Naive thymus-derived CD4-positive, alpha-beta T cell (primary cell): ENCODE measurements at regions of chr13 and their contacts with region 1.

Region 1: GRCh38 chr13:46553886-46554858 is 1.2 kb downstream of the LRCH1 start:
- DNase-seq: peak; percentile 52 to 77 (median 64)
- ATAC-seq: peak; percentile 77
- H3K4me3 ChIP-seq: peak overlapping the region; percentile 90
- H3K4me3 Mint-ChIP-seq: peak overlapping the region; percentile 92 to 99 (median 95)
- H3K27ac ChIP-seq: peak overlapping the region; percentile 82
- H3K27ac Mint-ChIP-seq: peak overlapping the region; percentile 70 to 96 (median 88)
- H3K4me1 ChIP-seq: peaks cover 26 to 29% of the 10 kb centered on the region in 2 donors
- H3K4me1 Mint-ChIP-seq: peaks cover 32 to 61% (median 55%) of the 10 kb centered on the region in 7 donors
- H3K27me3 ChIP-seq: no peaks in the 10 kb centered on the region
- H3K27me3 Mint-ChIP-seq: peaks cover 0 to 5% (median 0%) of the 10 kb centered on the region in 5 donors

Region 2: GRCh38 chr13:44988973-44989817 is 1565.0 kb before region 1 on chr13 and contains the starts of genes GPALPP1 and NUFIP1:
- CTCF ChIA-PET with region 1: no interaction called
- POLR2A ChIA-PET with region 1: no interaction called
- intact Hi-C with region 1: loop called in 1 of 2 experiments (anchors 5 kb)
- DNase-seq: peak; percentile 79 to 94 (median 90)
- ATAC-seq: peak; percentile 98
- H3K4me3 ChIP-seq: peak within 1 kb of the TSS; percentile 94
- H3K4me3 Mint-ChIP-seq: peak within 1 kb of the TSS; percentile 96 to 100 (median 98)
- H3K27ac ChIP-seq: peak within 1 kb of the TSS; percentile 95
- H3K27ac Mint-ChIP-seq: peak within 1 kb of the TSS; percentile 91 to 99 (median 98)
- H3K4me1 ChIP-seq: peaks cover 18 to 27% of the 10 kb centered on the region in 2 donors
- H3K4me1 Mint-ChIP-seq: peaks cover 42 to 81% (median 68%) of the 10 kb centered on the region in 7 donors
- H3K27me3 ChIP-seq: no peaks in the 10 kb centered on the region
- H3K27me3 Mint-ChIP-seq: no peaks in the 10 kb centered on the region
- total RNA-seq, gene GPALPP1: 29.7 to 43.1 (median 33.0) TPM
- total RNA-seq, gene NUFIP1: 3.7 to 6.6 (median 5.4) TPM

Region 3: GRCh38 chr13:46052319-46053161 is 501.6 kb before region 1 on chr13 and contains the start of gene ZC3H13:
- CTCF ChIA-PET with region 1: no interaction called
- POLR2A ChIA-PET with region 1: no interaction called
- intact Hi-C with region 1: loop called (anchors 5 kb)
- DNase-seq: peak; percentile 75 to 95 (median 92)
- ATAC-seq: peak; percentile 100
- H3K4me3 ChIP-seq: peak within 1 kb of the TSS; percentile 89
- H3K4me3 Mint-ChIP-seq: peak within 1 kb of the TSS; percentile 87 to 96 (median 94)
- H3K27ac ChIP-seq: peak within 1 kb of the TSS; percentile 98
- H3K27ac Mint-ChIP-seq: peak within 1 kb of the TSS; percentile 93 to 99 (median 97)
- H3K4me1 ChIP-seq: peaks cover 22 to 26% of the 10 kb centered on the region in 2 donors
- H3K4me1 Mint-ChIP-seq: peaks cover 19 to 63% (median 46%) of the 10 kb centered on the region in 7 donors
- H3K27me3 ChIP-seq: no peaks in the 10 kb centered on the region
- H3K27me3 Mint-ChIP-seq: peaks cover 5 to 32% (median 15%) of the 10 kb centered on the region in 5 donors
- total RNA-seq, gene ZC3H13: 41.1 to 67.0 (median 46.5) TPM

Region 4: DNA sequence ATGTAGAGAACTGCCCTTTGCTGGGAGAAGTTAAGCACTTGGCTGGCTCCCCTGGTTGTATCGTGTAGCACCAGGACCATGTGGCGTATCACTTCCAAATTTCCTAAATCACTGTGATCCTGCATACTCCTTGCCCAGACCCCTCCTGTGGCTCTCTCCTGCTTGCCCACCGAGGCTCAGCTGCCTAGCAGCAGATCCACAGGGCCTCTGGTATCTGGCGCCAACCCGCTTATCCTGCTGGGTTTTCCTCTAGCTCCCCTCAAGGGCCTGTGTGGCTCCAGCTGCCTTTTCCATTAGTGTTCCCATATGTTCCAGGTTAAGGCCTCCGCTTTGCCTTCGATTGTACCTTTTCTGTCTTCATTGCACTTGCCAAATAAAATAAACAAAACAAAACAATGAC is 15.3 kb after region 1 on chr13:
- CTCF ChIA-PET with region 1: interaction called, 3 read pairs
- POLR2A ChIA-PET with region 1: no interaction called
- intact Hi-C with region 1: loop called in 1 of 2 experiments (anchors 2 kb)
- DNase-seq: no peak
- ATAC-seq: no peak
- H3K4me3 ChIP-seq: no peak overlapping the region
- H3K4me3 Mint-ChIP-seq: no peak overlapping the region
- H3K27ac ChIP-seq: no peak overlapping the region
- H3K27ac Mint-ChIP-seq: no peak overlapping the region
- H3K4me1 ChIP-seq: no peaks in the 10 kb centered on the region
- H3K4me1 Mint-ChIP-seq: peaks cover 34 to 72% (median 42%) of the 10 kb centered on the region in 7 donors
- H3K27me3 ChIP-seq: no peaks in the 10 kb centered on the region
- H3K27me3 Mint-ChIP-seq: no peaks in the 10 kb centered on the region

Region 5: GRCh38 chr13:46679369-46680120 is 125.4 kb after region 1 on chr13:
- CTCF ChIA-PET with region 1: interaction called, 7 read pairs
- POLR2A ChIA-PET with region 1: no interaction called
- intact Hi-C with region 1: loop called (anchors 1 kb)
- DNase-seq: peak in 8 of 9 donors; percentile 14 to 64 (median 44)
- ATAC-seq: peak; percentile 92
- H3K4me3 ChIP-seq: peak overlapping the region; percentile 39
- H3K4me3 Mint-ChIP-seq: no peak overlapping the region
- H3K27ac ChIP-seq: peak overlapping the region; percentile 55
- H3K27ac Mint-ChIP-seq: no peak overlapping the region
- H3K4me1 ChIP-seq: peaks cover 5 to 20% of the 10 kb centered on the region in 2 donors
- H3K4me1 Mint-ChIP-seq: peaks cover under 1 to 35% (median 9%) of the 10 kb centered on the region in 7 donors
- H3K27me3 ChIP-seq: no peaks in the 10 kb centered on the region
- H3K27me3 Mint-ChIP-seq: no peaks in the 10 kb centered on the region

Region 6: GRCh38 chr13:47256618-47257017 is 702.4 kb after region 1 on chr13:
- CTCF ChIA-PET with region 1: no interaction called
- POLR2A ChIA-PET with region 1: no interaction called
- intact Hi-C with region 1: no loop called
- DNase-seq: no peak
- ATAC-seq: no peak
- H3K4me3 ChIP-seq: no peak overlapping the region
- H3K4me3 Mint-ChIP-seq: no peak overlapping the region
- H3K27ac ChIP-seq: no peak overlapping the region
- H3K27ac Mint-ChIP-seq: no peak overlapping the region
- H3K4me1 ChIP-seq: no peaks in the 10 kb centered on the region
- H3K4me1 Mint-ChIP-seq: no peaks in the 10 kb centered on the region
- H3K27me3 ChIP-seq: no peaks in the 10 kb centered on the region
- H3K27me3 Mint-ChIP-seq: peaks cover 0 to 7% (median 4%) of the 10 kb centered on the region in 5 donors

Region 7: DNA sequence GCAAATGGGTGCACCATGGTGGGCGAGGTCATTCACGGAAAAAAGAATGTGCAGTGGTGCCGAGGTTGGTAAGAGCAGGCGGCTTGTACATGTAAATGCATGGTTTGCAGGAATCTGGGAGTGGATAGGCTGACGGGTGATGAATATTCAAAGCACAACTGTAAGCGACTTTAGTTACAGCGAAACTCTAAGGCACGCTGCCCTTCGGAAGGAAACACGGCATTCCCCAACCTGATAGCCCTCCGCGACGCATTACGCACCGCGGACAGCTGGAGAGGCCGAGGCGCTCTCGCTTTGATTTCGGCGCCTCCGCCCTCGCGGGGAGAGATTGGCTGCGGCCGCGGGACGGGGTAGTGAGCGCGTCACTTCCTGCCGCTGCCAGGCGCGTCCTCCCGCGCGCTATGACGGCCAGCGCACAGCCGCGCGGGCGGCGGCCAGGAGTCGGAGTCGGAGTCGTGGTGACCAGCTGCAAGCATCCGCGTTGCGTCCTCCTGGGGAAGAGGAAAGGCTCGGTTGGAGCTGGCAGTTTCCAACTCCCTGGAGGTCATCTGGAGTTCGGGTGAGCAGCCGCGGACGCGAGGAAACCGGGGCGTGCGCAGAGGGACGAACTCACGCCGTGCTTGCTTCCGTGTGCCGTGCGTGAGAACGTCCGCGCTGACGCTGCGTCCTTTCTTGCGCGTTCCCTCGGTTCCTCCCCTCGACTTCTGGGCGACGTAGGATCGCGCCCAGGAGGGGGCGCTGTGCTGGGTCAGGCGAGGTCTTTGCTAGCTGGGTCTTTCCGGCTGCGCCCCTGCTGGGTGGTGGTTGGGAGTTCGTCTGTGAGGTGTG is 1483.4 kb after region 1 on chr13 and contains the start of gene NUDT15:
- CTCF ChIA-PET with region 1: no interaction called
- POLR2A ChIA-PET with region 1: no interaction called
- intact Hi-C with region 1: loop called in 1 of 2 experiments (anchors 5 kb)
- DNase-seq: peak; percentile 93 to 98 (median 97)
- ATAC-seq: peak; percentile 96
- H3K4me3 ChIP-seq: peak within 1 kb of the TSS; percentile 90
- H3K4me3 Mint-ChIP-seq: peak within 1 kb of the TSS; percentile 82 to 98 (median 95)
- H3K27ac ChIP-seq: peak within 1 kb of the TSS; percentile 91
- H3K27ac Mint-ChIP-seq: peak within 1 kb of the TSS; percentile 96 to 100 (median 97)
- H3K4me1 ChIP-seq: peaks cover 14 to 15% of the 10 kb centered on the region in 2 donors
- H3K4me1 Mint-ChIP-seq: peaks cover 15 to 52% (median 40%) of the 10 kb centered on the region in 7 donors
- H3K27me3 ChIP-seq: no peaks in the 10 kb centered on the region
- H3K27me3 Mint-ChIP-seq: no peaks in the 10 kb centered on the region
- total RNA-seq, gene NUDT15: 4.3 to 13.6 (median 8.7) TPM